ENCODE measurements at regions of chr3 and their contacts with region 1.

Region 1: GRCh38 chr3:64166584-64167162 is 58.6 kb downstream of the PRICKLE2 start:
- DNase-seq: peak; percentile 31
- ATAC-seq: peak; percentile 82
- H3K4me3 Mint-ChIP-seq: no peak overlapping the region
- H3K27ac Mint-ChIP-seq: no peak overlapping the region
- H3K4me1 Mint-ChIP-seq: peaks cover 35% of the 10 kb centered on the region
- H3K27me3 Mint-ChIP-seq: no peaks in the 10 kb centered on the region
- CTCF ChIP-seq: 0 out of 2 replicates have a peak, but pooled peaks have one; percentile 13

Region 2: DNA sequence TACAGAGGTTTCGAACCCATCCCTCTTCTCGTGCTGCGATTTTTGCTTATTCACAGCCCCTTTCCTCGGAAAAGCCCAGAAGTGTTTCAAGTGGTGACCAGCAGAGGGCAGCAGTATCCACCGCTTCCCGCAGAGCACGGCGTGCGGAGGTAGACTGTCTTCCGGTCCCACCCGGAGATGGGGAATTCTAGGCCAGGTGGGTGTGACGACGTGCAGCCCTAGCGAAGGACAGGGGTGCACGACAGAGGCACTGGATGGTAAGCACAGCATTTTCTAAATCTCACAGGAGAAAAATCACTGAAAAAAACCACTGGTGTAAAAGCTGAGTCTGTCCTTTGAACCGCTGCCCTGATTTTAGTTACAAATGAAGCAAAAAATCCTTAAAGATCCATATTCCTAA is 135.9 kb before region 1 on chr3:
- CTCF ChIA-PET with region 1: interaction called, 12 read pairs
- POLR2A ChIA-PET with region 1: no interaction called
- DNase-seq: peak; percentile 88
- ATAC-seq: peak; percentile 95
- H3K4me3 Mint-ChIP-seq: peak overlapping the region; percentile 31
- H3K27ac Mint-ChIP-seq: peak overlapping the region; percentile 5; the same call in 1 of the 2 replicates
- H3K4me1 Mint-ChIP-seq: peaks cover 31% of the 10 kb centered on the region
- H3K27me3 Mint-ChIP-seq: no peaks in the 10 kb centered on the region
- CTCF ChIP-seq: peak; percentile 73